ENCODE measurements at regions of chr1 and their contacts with region 1.

Region 1: DNA sequence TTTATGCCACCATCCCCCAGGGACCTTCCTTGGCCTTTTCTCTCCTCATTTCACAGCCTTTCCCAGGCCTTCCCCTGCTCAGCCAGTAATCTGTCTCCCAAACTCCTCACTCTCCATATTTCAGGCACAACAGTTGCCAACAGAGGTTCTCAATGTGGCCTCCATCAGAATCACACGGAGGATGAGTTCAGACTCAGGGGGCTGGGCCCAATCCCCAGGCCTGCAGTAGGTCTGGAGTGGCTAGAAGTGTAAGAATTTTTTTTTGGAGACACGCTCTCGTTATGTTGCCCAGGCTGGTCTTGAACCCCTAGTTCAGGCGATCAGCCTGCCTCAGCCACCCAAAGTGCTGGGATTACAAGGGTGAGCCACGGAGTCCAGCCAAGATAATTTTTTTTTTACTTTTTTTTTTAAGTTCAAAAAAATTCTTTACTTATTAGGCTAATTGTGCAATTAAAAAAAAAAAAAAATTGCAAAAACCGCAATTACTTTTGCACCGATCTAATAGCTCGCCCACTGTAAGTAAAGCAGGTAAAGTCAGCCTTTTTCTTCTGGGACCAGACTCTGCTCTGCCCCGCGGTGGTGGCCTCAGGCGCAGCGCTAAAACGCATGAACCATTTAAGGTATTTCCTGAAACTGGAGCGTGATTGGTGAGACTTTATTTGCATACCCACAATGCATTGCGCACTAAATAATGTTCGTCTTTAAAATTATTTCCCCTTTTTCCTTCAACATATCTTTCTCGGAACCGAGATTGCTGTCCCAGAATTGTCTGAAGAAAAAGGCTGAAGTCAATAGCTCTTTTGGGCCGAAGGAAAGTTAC is 18.7 kb downstream of the KIAA2013 start:
- DNase-seq: peak; percentile 93
- ATAC-seq: peak; percentile 63
- H3K4me3 ChIP-seq: peak overlapping the region in 1 of 3 experiments; percentile 76; a peak in 3 of 6 replicates
- H3K27ac ChIP-seq: peak overlapping the region; percentile 100
- H3K4me1 ChIP-seq: peaks cover 40% of the 10 kb centered on the region
- H3K27me3 ChIP-seq: peaks cover 0 to 2% of the 10 kb centered on the region in 2 experiments; a peak in 2 of 5 replicates
- CTCF ChIP-seq: peak; percentile 84
- EP300 ChIP-seq: no peak
- POLR2A ChIP-seq: no peak
- RAD21 ChIP-seq: peak; percentile 34; the same call in 1 of the 2 replicates

Region 2: GRCh38 chr1:11501558-11501897 is 406.0 kb before region 1 on chr1:
- CTCF ChIA-PET with region 1: no interaction called
- POLR2A ChIA-PET with region 1: no interaction called
- in situ Hi-C with region 1: no loop called
- intact Hi-C with region 1: no loop called
- DNase-seq: no peak
- ATAC-seq: no peak
- H3K4me3 ChIP-seq: no peak overlapping the region
- H3K27ac ChIP-seq: no peak overlapping the region
- H3K4me1 ChIP-seq: no peaks in the 10 kb centered on the region
- H3K27me3 ChIP-seq: peaks cover 6 to 34% of the 10 kb centered on the region in 2 experiments; a peak in 4 of 5 replicates
- CTCF ChIP-seq: no peak
- EP300 ChIP-seq: no peak
- POLR2A ChIP-seq: no peak
- RAD21 ChIP-seq: no peak

Region 3: DNA sequence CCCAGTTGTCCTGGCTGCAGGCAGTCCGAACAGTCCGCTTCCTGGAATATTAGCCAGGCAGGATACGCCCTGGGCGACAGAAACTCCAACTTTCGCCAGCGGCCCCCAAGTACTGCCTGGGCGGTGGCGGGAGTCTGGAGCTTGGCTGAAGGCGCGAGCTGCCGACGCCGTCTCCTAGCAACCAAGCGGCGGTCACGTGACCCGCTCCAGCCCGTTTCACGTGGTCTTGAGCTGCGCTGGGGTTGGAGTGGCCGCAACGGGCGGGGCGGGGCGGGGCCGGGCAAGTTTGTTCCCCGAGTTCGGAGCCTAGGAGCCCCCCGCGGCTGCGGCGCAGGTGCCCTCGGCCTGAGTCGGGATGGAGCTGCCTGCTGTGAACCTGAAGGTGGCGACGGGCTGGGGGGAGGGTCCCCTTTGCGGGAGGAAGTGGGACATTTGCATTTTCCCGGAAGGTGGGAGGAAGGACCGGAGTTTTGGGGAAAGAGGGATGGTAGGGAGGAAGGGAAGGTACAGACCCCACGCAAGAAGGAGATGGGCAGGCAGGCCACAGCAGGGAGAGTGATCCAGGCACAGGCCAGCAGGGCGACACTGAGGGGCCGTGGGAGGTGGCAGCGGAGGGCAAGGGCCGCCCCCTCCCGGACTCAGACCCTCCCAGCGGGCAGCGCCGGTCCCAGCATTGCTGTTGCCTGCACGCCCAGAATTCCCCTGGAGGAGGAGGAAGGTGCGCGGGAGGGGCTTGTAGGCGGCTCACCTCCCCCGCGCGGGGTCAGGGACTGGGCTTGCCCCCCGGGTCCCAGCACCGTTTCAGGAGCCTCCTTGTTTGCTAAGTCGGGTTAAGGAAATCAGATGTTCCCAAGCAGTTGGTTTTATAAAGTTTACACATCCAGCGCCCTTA is 171.4 kb before region 1 on chr1 and contains the start of gene AGTRAP:
- CTCF ChIA-PET with region 1: no interaction called
- POLR2A ChIA-PET with region 1: interaction called, 17 read pairs
- in situ Hi-C with region 1: no loop called
- intact Hi-C with region 1: no loop called
- DNase-seq: peak; percentile 82
- ATAC-seq: peak; percentile 89
- H3K4me3 ChIP-seq: peak within 1 kb of the TSS; percentile 86 to 99 (median 98)
- H3K27ac ChIP-seq: peak within 1 kb of the TSS; percentile 71
- H3K4me1 ChIP-seq: peaks cover 51% of the 10 kb centered on the region
- H3K27me3 ChIP-seq: peaks cover 0 to 3% of the 10 kb centered on the region in 2 experiments; a peak in 2 of 5 replicates
- CTCF ChIP-seq: peak; percentile 45; the same call in 1 of the 2 replicates
- EP300 ChIP-seq: peak in 1 of 2 experiments; percentile 15; a peak in 1 of 4 replicates
- POLR2A ChIP-seq: peak; percentile 24 to 36; a peak in 1 of 4 replicates
- RAD21 ChIP-seq: no peak
- total RNA-seq, gene AGTRAP: 15.7 and 32.0 TPM in 2 replicates

Region 4: GRCh38 chr1:11813021-11813420 is 94.5 kb before region 1 on chr1:
- CTCF ChIA-PET with region 1: no interaction called
- POLR2A ChIA-PET with region 1: no interaction called
- in situ Hi-C with region 1: no loop called
- intact Hi-C with region 1: no loop called
- DNase-seq: no peak
- ATAC-seq: no peak
- H3K4me3 ChIP-seq: no peak overlapping the region
- H3K27ac ChIP-seq: no peak overlapping the region
- H3K4me1 ChIP-seq: peaks cover 45% of the 10 kb centered on the region
- H3K27me3 ChIP-seq: no peaks in the 10 kb centered on the region
- CTCF ChIP-seq: no peak
- EP300 ChIP-seq: no peak
- POLR2A ChIP-seq: no peak
- RAD21 ChIP-seq: no peak

Region 5: DNA sequence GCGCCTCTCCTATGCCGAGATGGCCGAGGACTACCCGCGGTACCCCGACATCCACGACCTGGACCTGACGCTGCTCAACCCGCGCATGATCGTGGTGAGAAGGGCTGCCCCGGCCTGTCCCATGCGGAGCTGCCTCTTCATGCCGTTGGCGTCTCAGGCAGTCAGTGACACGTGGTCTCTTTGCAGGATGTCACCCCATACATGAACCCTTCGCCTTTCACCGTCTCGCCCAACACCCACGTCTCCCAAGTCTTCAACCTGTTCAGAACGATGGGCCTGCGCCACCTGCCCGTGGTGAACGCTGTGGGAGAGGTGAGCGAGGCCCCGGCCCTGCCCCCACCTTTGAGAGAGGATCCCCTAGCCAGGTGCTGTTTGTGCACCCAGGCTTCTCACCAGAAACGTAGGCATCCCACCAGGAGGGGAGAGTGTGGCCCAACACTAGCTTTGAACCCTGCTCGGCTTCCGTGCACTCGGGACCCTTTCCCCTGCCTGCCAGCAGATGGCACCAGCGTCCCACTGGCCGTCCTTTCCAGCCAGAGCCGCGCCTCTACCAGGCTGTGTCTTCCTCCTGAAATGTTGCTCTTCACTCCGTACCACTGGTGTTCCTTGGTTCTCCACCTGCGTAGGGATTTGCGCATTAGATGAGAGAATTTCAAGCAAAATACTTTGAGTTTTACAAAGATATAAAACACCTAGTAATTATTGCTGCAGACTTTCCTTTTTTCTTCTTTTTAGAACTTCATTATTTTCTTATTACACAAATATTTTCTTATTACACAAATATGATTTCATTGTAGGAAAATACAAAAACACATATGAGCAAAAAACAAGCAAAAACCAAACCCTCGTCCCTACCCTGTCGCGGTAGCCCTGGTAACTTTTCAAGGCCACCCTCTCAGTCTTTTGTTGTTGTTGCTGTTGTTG is 68.9 kb before region 1 on chr1:
- CTCF ChIA-PET with region 1: interaction called, 15 read pairs
- POLR2A ChIA-PET with region 1: interaction called, 53 read pairs
- in situ Hi-C with region 1: no loop called
- intact Hi-C with region 1: loop called (anchors 5 kb)
- DNase-seq: peak; percentile 47
- ATAC-seq: peak; percentile 58
- H3K4me3 ChIP-seq: no peak overlapping the region
- H3K27ac ChIP-seq: no peak overlapping the region
- H3K4me1 ChIP-seq: peaks cover 48% of the 10 kb centered on the region
- H3K27me3 ChIP-seq: no peaks in the 10 kb centered on the region
- CTCF ChIP-seq: peak; percentile 99
- EP300 ChIP-seq: no peak
- POLR2A ChIP-seq: no peak
- RAD21 ChIP-seq: peak; percentile 96

Region 6: DNA sequence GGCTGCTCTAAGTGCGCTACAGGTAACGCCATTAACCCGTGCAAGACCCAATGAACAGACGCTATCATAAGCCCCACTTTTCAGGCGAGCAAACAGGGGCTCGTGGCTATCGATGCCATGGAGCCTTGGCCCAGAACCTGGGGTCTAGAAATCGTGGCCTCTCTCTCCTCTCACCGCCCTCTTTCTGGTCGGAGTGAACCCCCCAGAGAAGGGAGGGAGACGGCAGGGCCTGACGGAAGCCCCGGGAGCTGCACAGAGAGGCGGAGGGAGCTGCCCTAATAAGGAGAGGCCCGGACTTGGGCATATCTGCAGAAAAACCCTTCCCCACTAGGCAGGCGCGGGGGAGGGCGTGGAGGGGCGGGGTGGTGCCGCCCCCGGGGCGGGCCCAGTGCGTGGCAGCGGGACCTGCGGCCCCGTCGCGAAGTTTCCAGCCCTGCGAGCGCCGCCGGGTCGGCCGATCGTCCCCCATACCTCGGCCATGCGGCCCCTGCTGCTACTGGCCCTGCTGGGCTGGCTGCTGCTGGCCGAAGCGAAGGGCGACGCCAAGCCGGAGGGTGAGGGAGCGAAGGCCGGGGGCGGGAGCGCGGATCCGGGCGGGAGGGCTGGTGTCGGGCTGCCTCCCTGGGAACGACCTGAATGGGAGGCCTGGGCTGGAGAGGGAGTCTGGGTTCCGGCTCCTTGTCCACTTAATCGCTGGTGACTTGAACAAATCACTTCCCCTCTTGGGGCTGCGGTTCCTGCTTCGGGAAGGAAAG is 27.0 kb after region 1 on chr1 and contains the start of gene PLOD1:
- CTCF ChIA-PET with region 1: no interaction called
- POLR2A ChIA-PET with region 1: interaction called, 178 read pairs
- in situ Hi-C with region 1: no loop called
- intact Hi-C with region 1: loop called (anchors 2 kb)
- DNase-seq: peak; percentile 79
- ATAC-seq: peak; percentile 95
- H3K4me3 ChIP-seq: peak within 1 kb of the TSS; percentile 77 to 89 (median 82)
- H3K27ac ChIP-seq: peak within 1 kb of the TSS; percentile 84
- H3K4me1 ChIP-seq: peaks cover 73% of the 10 kb centered on the region
- H3K27me3 ChIP-seq: no peaks in the 10 kb centered on the region; a peak in 1 of 5 replicates
- CTCF ChIP-seq: no peak; the same call in 1 of the 2 replicates
- EP300 ChIP-seq: no peak
- POLR2A ChIP-seq: peak; percentile 59 to 91
- RAD21 ChIP-seq: peak; percentile 44; the same call in 1 of the 2 replicates
- total RNA-seq, gene PLOD1: 31.0 and 70.1 TPM in 2 replicates

Region 7: DNA sequence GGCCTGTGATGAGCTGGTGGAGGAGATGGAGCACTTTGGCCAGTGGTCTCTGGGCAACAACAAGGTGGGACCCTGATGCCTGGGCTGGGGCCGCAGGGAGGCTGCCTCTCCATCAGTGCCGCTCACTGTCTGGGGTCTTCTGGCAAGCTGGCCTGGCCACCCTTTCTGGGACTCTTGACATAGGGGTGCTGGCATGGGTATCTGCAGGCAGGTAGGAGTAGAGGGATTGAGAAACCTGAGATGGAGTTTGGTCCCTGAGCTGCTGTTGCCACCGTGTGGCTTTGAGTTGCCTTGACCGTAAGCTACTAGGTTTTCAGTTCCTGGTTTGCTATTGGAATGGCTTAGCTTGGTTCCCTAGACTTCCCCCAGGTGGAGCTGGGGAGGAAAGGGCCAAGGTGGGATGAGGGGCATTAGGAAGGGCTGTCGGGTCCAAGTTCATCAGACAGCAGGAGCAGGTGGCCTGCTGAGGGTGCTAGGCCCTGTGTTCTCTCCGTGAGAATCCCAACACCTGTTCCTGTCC is 59.6 kb after region 1 on chr1:
- CTCF ChIA-PET with region 1: no interaction called
- POLR2A ChIA-PET with region 1: interaction called, 81 read pairs
- in situ Hi-C with region 1: loop called (anchors 5 kb)
- intact Hi-C with region 1: loop called (anchors 1 kb)
- DNase-seq: peak; percentile 89
- ATAC-seq: peak; percentile 94
- H3K4me3 ChIP-seq: no peak overlapping the region
- H3K27ac ChIP-seq: peak overlapping the region; percentile 26
- H3K4me1 ChIP-seq: peaks cover 8% of the 10 kb centered on the region; the same call in 1 of the 2 replicates
- H3K27me3 ChIP-seq: no peaks in the 10 kb centered on the region
- CTCF ChIP-seq: peak; percentile 94
- EP300 ChIP-seq: no peak
- POLR2A ChIP-seq: no peak; a peak in 1 of 4 replicates
- RAD21 ChIP-seq: peak; percentile 92

Region 8: DNA sequence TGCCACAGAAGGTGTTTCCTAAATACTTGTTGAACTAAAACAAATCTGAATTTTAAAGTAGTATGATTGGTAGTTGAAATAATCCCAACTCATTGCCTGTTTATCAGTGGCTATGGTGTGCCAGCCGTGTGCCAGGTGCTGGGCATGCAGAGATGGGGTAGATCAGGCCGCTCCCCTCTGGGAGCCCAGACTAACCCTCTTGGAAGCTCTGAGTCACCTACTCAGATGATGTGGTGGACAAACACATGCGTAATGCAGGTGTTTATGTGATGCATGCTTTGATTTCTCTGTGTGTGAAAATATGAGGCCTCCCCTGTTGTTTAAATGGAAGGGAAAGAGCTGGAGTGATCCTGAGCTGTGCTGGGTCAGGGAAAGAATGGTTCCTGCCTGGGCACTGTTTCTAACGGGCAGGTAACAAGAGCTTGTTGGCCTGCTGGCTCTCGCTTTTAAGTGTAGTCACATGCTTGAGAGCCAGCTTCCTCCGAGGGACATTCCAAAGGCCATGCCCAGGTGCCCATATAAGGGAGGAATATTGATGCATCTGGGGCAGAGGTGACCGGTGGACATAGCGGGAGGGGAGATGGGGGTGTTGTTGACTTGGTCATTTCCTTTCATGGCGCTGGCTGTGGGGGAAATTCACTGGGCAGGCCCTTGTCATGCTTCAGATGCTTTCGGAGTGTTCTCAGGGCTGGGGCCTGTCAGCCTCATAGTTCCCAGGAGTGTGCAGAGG is 83.0 kb after region 1 on chr1:
- CTCF ChIA-PET with region 1: no interaction called
- POLR2A ChIA-PET with region 1: interaction called, 28 read pairs
- in situ Hi-C with region 1: no loop called
- intact Hi-C with region 1: no loop called
- DNase-seq: peak; percentile 67
- ATAC-seq: peak; percentile 84
- H3K4me3 ChIP-seq: no peak overlapping the region
- H3K27ac ChIP-seq: peak overlapping the region; percentile 73
- H3K4me1 ChIP-seq: peaks cover 45% of the 10 kb centered on the region
- H3K27me3 ChIP-seq: no peaks in the 10 kb centered on the region
- CTCF ChIP-seq: no peak
- EP300 ChIP-seq: no peak; a peak in 1 of 4 replicates
- POLR2A ChIP-seq: peak in 1 of 2 experiments; percentile 49; a peak in 1 of 4 replicates
- RAD21 ChIP-seq: no peak